Mammary epithelial cell (primary cell): ENCODE measurements at regions of chr5 and their contacts with region 1.

Region 1: GRCh38 chr5:88680253-88681132 is 202.5 kb downstream of the MEF2C start:
- DNase-seq: peak; percentile 35
- H3K4me3 ChIP-seq: peak overlapping the region; percentile 30 to 42 (median 41)
- H3K27ac ChIP-seq: no peak overlapping the region
- H3K4me1 ChIP-seq: peaks cover 8% of the 10 kb centered on the region
- H3K27me3 ChIP-seq: peaks cover 66% of the 10 kb centered on the region
- CTCF ChIP-seq: peak; percentile 55 to 97

Region 2: GRCh38 chr5:87541033-87541432 is 1139.5 kb before region 1 on chr5:
- CTCF ChIA-PET with region 1: no interaction called
- dilution Hi-C with region 1: no loop called
- in situ Hi-C with region 1: no loop called
- intact Hi-C with region 1: loop called (anchors 10 kb)
- DNase-seq: peak; percentile 63
- H3K4me3 ChIP-seq: no peak overlapping the region
- H3K27ac ChIP-seq: no peak overlapping the region
- H3K4me1 ChIP-seq: no peaks in the 10 kb centered on the region
- H3K27me3 ChIP-seq: no peaks in the 10 kb centered on the region
- CTCF ChIP-seq: peak; percentile 31 to 48

Region 3: GRCh38 chr5:88268385-88269184 is 411.9 kb before region 1 on chr5 and contains the start of gene TMEM161B:
- CTCF ChIA-PET with region 1: no interaction called
- dilution Hi-C with region 1: no loop called
- in situ Hi-C with region 1: no loop called
- intact Hi-C with region 1: loop called (anchors 5 kb)
- DNase-seq: peak; percentile 92
- H3K4me3 ChIP-seq: peak within 1 kb of the TSS; percentile 61 to 93 (median 89)
- H3K27ac ChIP-seq: peak within 1 kb of the TSS; percentile 52
- H3K4me1 ChIP-seq: peaks cover 14% of the 10 kb centered on the region
- H3K27me3 ChIP-seq: no peaks in the 10 kb centered on the region
- CTCF ChIP-seq: no peak
- total RNA-seq, gene TMEM161B: 14.4 to 14.8 TPM